Activated T-helper 2 cell treated with anti-CD3 and anti-CD28 coated beads, Interferon-gamma antibody, Interleukin-2, Interleukin-4, amounts not matched to agents 10 μg/mL and 5 μg/mL and 100 μg/mL, durations not matched to agents 14 hours and 24 hours and 36 hours (primary cell): ENCODE measurements at regions of chr5 and their contacts with region 1.

Region 1: GRCh38 chr5:131382407-131383395 is 118.8 kb downstream of the CDC42SE2 start:
- DNase-seq: peak; percentile 56
- H3K4me3 Mint-ChIP-seq: peak overlapping the region; percentile 40
- H3K27ac Mint-ChIP-seq: peak overlapping the region; percentile 97
- H3K4me1 Mint-ChIP-seq: peaks cover 80% of the 10 kb centered on the region
- H3K27me3 Mint-ChIP-seq: no peaks in the 10 kb centered on the region

Region 2: GRCh38 chr5:131165119-131165727 is 217.5 kb before region 1 on chr5 and contains the start of gene HINT1:
- intact Hi-C with region 1: loop called (anchors 1 kb)
- DNase-seq: peak; percentile 91
- H3K4me3 Mint-ChIP-seq: peak within 1 kb of the TSS; percentile 96
- H3K27ac Mint-ChIP-seq: peak within 1 kb of the TSS; percentile 99
- H3K4me1 Mint-ChIP-seq: peaks cover 49% of the 10 kb centered on the region
- H3K27me3 Mint-ChIP-seq: no peaks in the 10 kb centered on the region
- total RNA-seq, gene HINT1: 279 and 282 TPM in 2 replicates

Region 3: GRCh38 chr5:131270809-131271208 is 111.9 kb before region 1 on chr5:
- intact Hi-C with region 1: loop called (anchors 2 kb)
- DNase-seq: no peak
- H3K4me3 Mint-ChIP-seq: peak overlapping the region; percentile 78
- H3K27ac Mint-ChIP-seq: peak overlapping the region; percentile 74
- H3K4me1 Mint-ChIP-seq: peaks cover 49% of the 10 kb centered on the region
- H3K27me3 Mint-ChIP-seq: no peaks in the 10 kb centered on the region

Region 4: GRCh38 chr5:131289738-131290137 is 93.0 kb before region 1 on chr5:
- intact Hi-C with region 1: loop called (anchors 2 kb)
- DNase-seq: no peak
- H3K4me3 Mint-ChIP-seq: peak overlapping the region; percentile 68
- H3K27ac Mint-ChIP-seq: peak overlapping the region; percentile 84
- H3K4me1 Mint-ChIP-seq: peaks cover 48% of the 10 kb centered on the region
- H3K27me3 Mint-ChIP-seq: no peaks in the 10 kb centered on the region

Region 5: DNA sequence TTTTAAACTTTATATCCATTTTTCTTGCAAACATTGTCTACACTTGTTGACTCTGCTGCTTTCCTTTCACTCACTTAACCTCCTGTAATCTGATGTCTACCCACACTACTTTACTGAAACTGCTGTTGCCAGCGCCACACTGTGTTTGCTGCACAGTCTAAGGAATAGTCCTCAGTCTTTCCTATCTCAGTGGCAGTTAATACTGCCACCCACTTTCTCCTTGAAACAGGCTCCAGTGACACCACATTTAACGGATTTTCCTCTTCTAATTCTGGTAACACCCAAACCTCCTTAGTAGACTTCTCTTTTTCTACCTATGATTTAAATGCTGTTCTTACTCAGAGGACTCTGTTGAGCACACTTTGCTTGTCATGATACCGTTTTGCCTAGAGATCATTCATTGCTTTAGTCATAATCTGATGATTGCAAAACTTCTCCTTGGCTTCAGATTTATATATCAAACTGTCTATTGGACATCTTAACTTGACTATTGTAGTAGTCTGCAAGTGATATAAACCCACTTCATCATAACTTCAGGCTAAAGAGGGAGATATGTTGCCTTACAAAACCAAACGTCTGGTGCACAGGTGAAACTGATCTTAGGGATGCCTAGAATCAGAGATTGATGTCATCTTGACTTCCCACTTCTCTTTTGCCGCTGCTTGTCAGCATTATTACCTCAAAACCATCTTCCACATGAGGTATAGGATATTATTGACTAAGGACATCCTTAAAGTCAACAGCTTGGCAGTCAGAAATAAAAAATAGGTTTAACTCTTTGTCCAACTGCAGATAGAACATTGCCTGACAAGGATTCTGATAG is 24.8 kb before region 1 on chr5:
- intact Hi-C with region 1: loop called (anchors 1 kb)
- DNase-seq: no peak
- H3K4me3 Mint-ChIP-seq: peak overlapping the region; percentile 41
- H3K27ac Mint-ChIP-seq: peak overlapping the region; percentile 90
- H3K4me1 Mint-ChIP-seq: peaks cover 48% of the 10 kb centered on the region
- H3K27me3 Mint-ChIP-seq: no peaks in the 10 kb centered on the region

Region 6: GRCh38 chr5:131536211-131536826 is 153.6 kb after region 1 on chr5:
- intact Hi-C with region 1: loop called (anchors 5 kb)
- DNase-seq: no peak
- H3K4me3 Mint-ChIP-seq: peak overlapping the region; percentile 45
- H3K27ac Mint-ChIP-seq: peak overlapping the region; percentile 67
- H3K4me1 Mint-ChIP-seq: peaks cover 58% of the 10 kb centered on the region
- H3K27me3 Mint-ChIP-seq: no peaks in the 10 kb centered on the region